Psoas muscle (tissue), 8 donors: ENCODE measurements at regions of chr3 and their contacts with region 1.

Region 1: DNA sequence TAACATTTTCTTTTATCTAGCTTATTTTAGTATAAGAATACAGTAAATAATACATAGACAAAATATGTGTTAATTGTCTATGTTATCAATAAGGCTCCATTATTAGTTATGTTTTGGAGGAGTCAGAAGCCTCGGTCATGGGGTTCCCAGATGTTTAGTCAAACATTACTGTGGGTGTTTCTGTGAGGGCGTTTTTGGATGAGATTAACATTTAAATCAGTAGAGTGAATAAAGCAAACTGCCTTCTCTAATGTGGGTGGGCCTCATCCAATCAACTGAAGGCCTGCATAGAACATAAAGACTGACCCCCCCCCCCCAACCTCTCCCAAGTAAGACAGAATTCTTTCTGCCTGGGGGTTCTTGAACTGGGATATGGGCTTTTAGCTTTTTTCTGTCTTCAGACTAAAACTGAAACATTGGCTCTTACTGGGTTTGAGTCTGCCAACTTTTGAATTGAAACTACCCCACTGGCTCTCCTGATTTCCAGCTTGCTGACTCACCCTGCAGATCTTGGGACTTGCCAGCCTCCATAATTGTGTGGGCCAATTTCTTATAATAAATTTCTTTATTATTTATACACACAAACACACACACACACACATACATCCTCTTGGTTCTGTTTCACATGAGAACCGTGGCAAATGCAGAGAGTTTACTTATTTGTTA is 192.0 kb downstream of the TPRG1 start:
- DNase-seq: no peak
- ATAC-seq: peak in 1 of 4 donors; percentile 48
- H3K4me3 ChIP-seq: no peak overlapping the region
- H3K27ac ChIP-seq: peak overlapping the region; percentile 83
- H3K4me1 ChIP-seq: peaks cover 64% of the 10 kb centered on the region
- H3K27me3 ChIP-seq: no peaks in the 10 kb centered on the region
- CTCF ChIP-seq: no peak

Region 2: GRCh38 chr3:189340672-189341460 is 22.9 kb before region 1 on chr3:
- intact Hi-C with region 1: no loop called
- DNase-seq: no peak
- ATAC-seq: no peak
- H3K4me3 ChIP-seq: no peak overlapping the region
- H3K27ac ChIP-seq: peak overlapping the region; percentile 85
- H3K4me1 ChIP-seq: peaks cover 40% of the 10 kb centered on the region
- H3K27me3 ChIP-seq: no peaks in the 10 kb centered on the region
- CTCF ChIP-seq: peak; percentile 35

Region 3: DNA sequence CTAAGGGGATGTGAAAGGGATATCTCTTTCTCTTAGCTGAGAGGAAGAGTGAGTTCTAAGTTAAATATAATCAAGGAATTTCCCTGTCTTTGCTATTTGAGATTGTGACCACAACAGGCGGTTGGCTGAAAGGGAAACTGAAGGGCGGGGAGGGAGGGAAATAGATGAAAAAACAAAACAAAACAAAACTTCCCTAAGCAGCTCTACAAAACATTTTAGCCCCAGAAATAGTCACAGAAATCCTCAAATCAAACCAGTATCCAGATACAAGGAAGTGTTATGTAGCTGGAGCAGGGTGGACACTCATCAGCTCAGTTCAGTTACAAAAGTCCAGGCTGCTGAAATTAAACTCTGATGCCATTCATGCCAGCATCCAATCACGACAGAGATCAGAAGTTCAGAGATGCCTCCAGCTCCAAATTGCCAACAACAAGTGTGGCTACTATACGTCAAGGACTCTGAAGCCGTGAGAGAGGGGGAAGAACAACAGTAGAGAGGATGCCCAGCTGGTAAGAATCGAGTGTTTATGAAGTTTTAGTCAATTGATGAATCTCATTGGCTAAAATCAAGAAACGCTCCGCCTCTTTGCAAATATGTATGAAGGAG is 267.1 kb after region 1 on chr3:
- intact Hi-C with region 1: loop called in 1 of 2 experiments (anchors 5 kb)
- DNase-seq: no peak
- ATAC-seq: peak; percentile 77 to 89 (median 84)
- H3K4me3 ChIP-seq: peak overlapping the region; percentile 72
- H3K27ac ChIP-seq: peak overlapping the region; percentile 91
- H3K4me1 ChIP-seq: peaks cover 46% of the 10 kb centered on the region
- H3K27me3 ChIP-seq: no peaks in the 10 kb centered on the region
- CTCF ChIP-seq: no peak